ENCODE measurements at regions of chr2 and their contacts with region 1.

Region 1: GRCh38 chr2:229714736-229715541 is 584 bp upstream of the DNER start:
- DNase-seq: peak; percentile 74
- H3K4me3 Mint-ChIP-seq: peak overlapping the region; percentile 70
- H3K27ac Mint-ChIP-seq: no peak overlapping the region
- H3K4me1 Mint-ChIP-seq: peaks cover 10% of the 10 kb centered on the region
- H3K27me3 Mint-ChIP-seq: peaks cover 59% of the 10 kb centered on the region
- CTCF ChIP-seq: no peak

Region 2: DNA sequence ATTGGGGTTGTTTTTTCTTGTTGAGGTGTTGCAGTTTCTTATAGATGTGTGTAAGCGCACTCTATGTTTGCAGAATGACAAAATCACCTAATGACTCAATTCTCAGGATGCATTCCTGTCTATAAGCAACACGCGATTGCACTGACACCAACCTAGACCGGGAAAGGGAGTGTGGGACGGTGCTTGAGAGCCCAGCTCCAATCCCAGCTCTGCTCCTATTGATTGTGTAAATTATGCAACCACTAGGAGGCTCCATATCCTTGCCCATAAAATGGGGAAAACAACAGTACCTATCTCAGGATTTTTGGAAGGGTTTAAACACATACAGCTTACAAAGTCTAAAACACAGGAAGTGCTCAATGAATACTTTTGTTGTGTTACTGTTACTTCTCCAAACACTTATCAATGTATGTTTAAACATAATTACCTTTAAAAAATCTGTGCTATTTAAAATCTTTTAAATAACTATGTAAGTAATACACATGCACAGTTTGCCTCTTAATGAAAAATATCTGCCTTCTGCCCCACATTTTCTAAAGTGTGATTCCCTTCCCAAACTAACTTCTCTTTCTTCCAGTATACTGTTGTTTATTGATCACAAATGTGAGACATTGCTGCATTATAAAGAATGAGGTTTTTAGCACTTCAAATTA is 1666.0 kb before region 1 on chr2:
- CTCF ChIA-PET with region 1: no interaction called
- POLR2A ChIA-PET with region 1: no interaction called
- intact Hi-C with region 1: loop called (anchors 5 kb)
- DNase-seq: peak; percentile 89
- H3K4me3 Mint-ChIP-seq: no peak overlapping the region
- H3K27ac Mint-ChIP-seq: no peak overlapping the region
- H3K4me1 Mint-ChIP-seq: peaks cover 7% of the 10 kb centered on the region
- H3K27me3 Mint-ChIP-seq: peaks cover 30% of the 10 kb centered on the region
- CTCF ChIP-seq: peak; percentile 47

Region 3: GRCh38 chr2:228681426-228681825 is 1033.5 kb before region 1 on chr2:
- CTCF ChIA-PET with region 1: interaction called, 4 read pairs
- POLR2A ChIA-PET with region 1: no interaction called
- intact Hi-C with region 1: loop called (anchors 5 kb)
- DNase-seq: peak; percentile 67
- H3K4me3 Mint-ChIP-seq: no peak overlapping the region
- H3K27ac Mint-ChIP-seq: no peak overlapping the region
- H3K4me1 Mint-ChIP-seq: peaks cover 7% of the 10 kb centered on the region
- H3K27me3 Mint-ChIP-seq: no peaks in the 10 kb centered on the region
- CTCF ChIP-seq: peak; percentile 65

Region 4: DNA sequence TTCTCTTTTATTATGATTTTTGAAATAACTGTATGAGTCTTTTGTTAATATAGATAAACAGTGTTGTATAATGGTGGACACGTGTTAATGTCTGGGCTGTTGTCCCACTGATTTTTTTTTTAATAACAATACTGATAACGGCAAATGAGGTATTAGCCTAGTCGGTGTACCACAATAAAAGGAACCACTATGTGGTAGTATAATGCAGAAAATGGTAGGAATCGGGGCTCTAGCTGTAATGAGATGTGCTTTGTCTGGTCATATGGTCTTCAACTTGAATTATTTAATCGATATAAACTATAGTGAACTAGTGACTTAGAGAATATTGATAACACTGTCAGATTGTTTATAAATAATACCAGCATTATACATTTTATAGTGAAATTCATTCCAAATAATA is 1015.5 kb before region 1 on chr2:
- CTCF ChIA-PET with region 1: no interaction called
- POLR2A ChIA-PET with region 1: no interaction called
- intact Hi-C with region 1: loop called (anchors 5 kb)
- DNase-seq: peak; percentile 59
- H3K4me3 Mint-ChIP-seq: no peak overlapping the region
- H3K27ac Mint-ChIP-seq: no peak overlapping the region
- H3K4me1 Mint-ChIP-seq: peaks cover 10% of the 10 kb centered on the region
- H3K27me3 Mint-ChIP-seq: no peaks in the 10 kb centered on the region
- CTCF ChIP-seq: peak; percentile 51

Region 5: GRCh38 chr2:229133155-229133772 is 581.7 kb before region 1 on chr2:
- CTCF ChIA-PET with region 1: interaction called, 3 read pairs
- POLR2A ChIA-PET with region 1: no interaction called
- intact Hi-C with region 1: loop called (anchors 1 kb)
- DNase-seq: peak; percentile 76
- H3K4me3 Mint-ChIP-seq: no peak overlapping the region
- H3K27ac Mint-ChIP-seq: no peak overlapping the region
- H3K4me1 Mint-ChIP-seq: peaks cover 11% of the 10 kb centered on the region
- H3K27me3 Mint-ChIP-seq: no peaks in the 10 kb centered on the region
- CTCF ChIP-seq: peak; percentile 57

Region 6: GRCh38 chr2:229431327-229431954 is 283.5 kb before region 1 on chr2:
- CTCF ChIA-PET with region 1: interaction called, 3 read pairs
- POLR2A ChIA-PET with region 1: interaction called, 3 read pairs
- intact Hi-C with region 1: loop called (anchors 5 kb)
- DNase-seq: peak; percentile 69
- H3K4me3 Mint-ChIP-seq: no peak overlapping the region
- H3K27ac Mint-ChIP-seq: peak overlapping the region; percentile 75
- H3K4me1 Mint-ChIP-seq: peaks cover 32% of the 10 kb centered on the region
- H3K27me3 Mint-ChIP-seq: no peaks in the 10 kb centered on the region
- CTCF ChIP-seq: peak; percentile 48

Region 7: DNA sequence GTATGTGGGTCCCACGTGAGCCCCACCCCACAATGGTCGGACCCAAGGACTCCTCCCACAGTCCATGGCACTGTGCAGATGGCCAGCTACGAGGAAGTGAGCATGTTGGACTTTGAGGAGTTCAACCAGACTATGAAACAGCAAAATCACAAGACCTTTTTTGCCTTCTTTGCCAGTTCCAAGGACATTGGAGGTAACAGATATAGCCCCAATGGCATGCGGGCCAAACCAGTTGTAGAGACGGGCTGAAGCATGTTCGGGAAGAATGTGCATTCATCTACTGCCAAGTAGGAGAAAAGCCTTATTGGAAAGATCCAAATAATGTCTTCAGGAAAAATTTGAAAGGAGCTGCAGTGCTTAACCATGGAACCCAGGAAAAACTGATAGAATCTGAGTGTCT is 13.2 kb before region 1 on chr2:
- CTCF ChIA-PET with region 1: interaction called, 12 read pairs
- POLR2A ChIA-PET with region 1: interaction called, 5 read pairs
- intact Hi-C with region 1: no loop called
- DNase-seq: no peak
- H3K4me3 Mint-ChIP-seq: no peak overlapping the region
- H3K27ac Mint-ChIP-seq: no peak overlapping the region
- H3K4me1 Mint-ChIP-seq: no peaks in the 10 kb centered on the region
- H3K27me3 Mint-ChIP-seq: no peaks in the 10 kb centered on the region
- CTCF ChIP-seq: no peak

Measured in MCF 10A (cell line).